BJ (cell line): ENCODE measurements at regions of chr11 and their contacts with region 1.

Region 1: GRCh38 chr11:123166071-123166559 is 28.9 kb downstream of the CLMP start:
- DNase-seq: no peak
- H3K4me3 ChIP-seq: no peak overlapping the region
- H3K27me3 ChIP-seq: no peaks in the 10 kb centered on the region
- CTCF ChIP-seq: peak; percentile 66

Region 2: DNA sequence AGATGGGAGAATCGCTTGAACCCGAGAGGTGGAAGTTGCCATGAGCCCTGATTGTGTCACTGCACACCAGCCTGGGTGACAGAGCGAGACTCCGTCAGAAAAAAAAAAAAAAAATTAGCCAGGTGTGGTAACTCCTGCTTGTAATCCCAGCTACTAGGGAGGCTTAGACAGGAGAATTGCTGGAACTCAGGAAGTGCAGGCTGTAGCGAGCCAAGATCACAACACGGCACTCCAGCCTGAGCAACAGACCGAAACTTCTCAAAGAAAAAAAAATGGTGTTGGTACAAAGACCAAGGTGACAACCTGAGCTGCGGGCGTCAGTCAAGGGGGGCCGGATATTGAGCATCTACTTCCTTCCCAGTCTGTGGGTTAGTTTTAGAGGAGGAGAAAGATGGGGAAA is 55.8 kb before region 1 on chr11:
- CTCF ChIA-PET with region 1: interaction called, 14 read pairs
- POLR2A ChIA-PET with region 1: no interaction called
- DNase-seq: no peak
- H3K4me3 ChIP-seq: no peak overlapping the region
- H3K27me3 ChIP-seq: no peaks in the 10 kb centered on the region
- CTCF ChIP-seq: no peak

Region 3: GRCh38 chr11:123152956-123153355 is 13.2 kb before region 1 on chr11:
- CTCF ChIA-PET with region 1: interaction called, 13 read pairs
- POLR2A ChIA-PET with region 1: no interaction called
- DNase-seq: no peak
- H3K4me3 ChIP-seq: no peak overlapping the region
- H3K27me3 ChIP-seq: no peaks in the 10 kb centered on the region
- CTCF ChIP-seq: no peak